Activated CD4-positive, alpha-beta T cell treated with anti-CD3 and anti-CD28 coated beads, Interleukin-2, amount 10 ng/mL, durations not matched to agents 24 days and 14 days (primary cell): ENCODE measurements at regions of chr6 and their contacts with region 1.

Region 1: DNA sequence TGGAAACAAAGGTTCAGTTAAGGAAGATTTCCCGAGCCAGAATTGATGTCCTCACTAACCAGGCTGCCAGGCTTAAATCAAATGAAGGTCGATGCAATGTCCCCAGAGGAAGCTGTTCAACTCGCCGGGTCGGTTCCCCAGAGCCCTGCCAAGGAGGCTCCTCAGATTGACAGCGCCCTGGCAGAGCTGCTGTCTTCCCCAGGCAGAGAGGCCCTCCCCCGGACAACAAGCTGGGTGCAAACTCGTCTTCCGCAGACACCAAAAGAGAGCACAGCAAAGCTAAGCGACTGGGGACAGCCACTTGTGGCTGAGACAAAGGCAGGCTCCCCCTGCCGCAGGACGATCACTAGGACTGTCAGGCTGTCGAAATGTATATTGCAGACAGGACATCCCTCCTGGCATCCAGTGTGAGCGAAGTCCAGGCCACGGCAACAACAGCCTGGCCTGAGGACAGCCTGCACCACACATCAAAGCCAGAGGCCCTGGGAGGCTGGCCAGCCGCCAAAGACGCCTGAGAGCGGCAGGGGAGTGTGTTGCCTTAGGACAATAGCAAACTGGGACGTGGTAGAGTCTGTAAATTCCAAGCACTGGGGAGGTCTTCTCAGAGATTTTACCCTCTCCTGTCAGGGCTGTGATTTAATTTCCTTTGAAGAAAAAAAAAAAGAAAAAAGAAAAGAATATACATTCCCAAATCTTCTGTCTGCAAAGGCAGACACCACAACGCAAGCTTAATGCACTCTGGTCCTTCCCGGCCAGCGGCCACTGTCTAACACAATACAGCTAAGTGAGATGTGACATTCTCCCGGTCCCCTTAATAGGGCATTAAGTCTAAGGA is 99.1 kb downstream of the HIVEP2 start:
- DNase-seq: peak; percentile 86
- H3K4me3 Mint-ChIP-seq: peak overlapping the region; percentile 78
- H3K27ac Mint-ChIP-seq: peak overlapping the region; percentile 82
- H3K4me1 Mint-ChIP-seq: peaks cover 77% of the 10 kb centered on the region
- H3K27me3 Mint-ChIP-seq: no peaks in the 10 kb centered on the region

Region 2: GRCh38 chr6:142485256-142485655 is 360.6 kb before region 1 on chr6:
- intact Hi-C with region 1: no loop called
- DNase-seq: no peak
- H3K4me3 Mint-ChIP-seq: no peak overlapping the region
- H3K27ac Mint-ChIP-seq: no peak overlapping the region
- H3K4me1 Mint-ChIP-seq: no peaks in the 10 kb centered on the region
- H3K27me3 Mint-ChIP-seq: peaks cover 2% of the 10 kb centered on the region

Region 3: DNA sequence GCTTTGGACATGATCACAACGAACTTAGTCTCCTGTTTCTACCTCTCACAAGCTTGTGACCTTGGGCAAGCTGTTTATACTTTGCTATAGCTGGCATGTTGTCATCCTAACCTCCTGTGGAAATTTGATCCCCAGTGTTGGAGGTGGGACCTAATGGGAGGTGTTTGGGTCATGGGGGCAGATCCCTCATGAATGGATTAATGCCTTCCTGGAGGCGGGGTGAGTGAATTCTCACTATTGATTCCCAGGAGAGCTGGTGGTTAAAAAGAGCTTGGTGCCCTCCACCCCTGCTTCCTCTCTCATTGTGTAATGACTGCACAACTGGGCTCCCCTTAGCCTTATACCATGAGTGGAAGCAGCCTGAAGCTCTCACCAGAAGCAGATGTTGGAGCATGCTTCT is 129.7 kb before region 1 on chr6:
- intact Hi-C with region 1: no loop called
- DNase-seq: no peak
- H3K4me3 Mint-ChIP-seq: no peak overlapping the region
- H3K27ac Mint-ChIP-seq: no peak overlapping the region
- H3K4me1 Mint-ChIP-seq: no peaks in the 10 kb centered on the region
- H3K27me3 Mint-ChIP-seq: no peaks in the 10 kb centered on the region

Region 4: GRCh38 chr6:142802124-142802523 is 43.7 kb before region 1 on chr6:
- intact Hi-C with region 1: loop called (anchors 1 kb)
- DNase-seq: no peak
- H3K4me3 Mint-ChIP-seq: peak overlapping the region; percentile 52
- H3K27ac Mint-ChIP-seq: peak overlapping the region; percentile 82
- H3K4me1 Mint-ChIP-seq: peaks cover 54% of the 10 kb centered on the region
- H3K27me3 Mint-ChIP-seq: no peaks in the 10 kb centered on the region

Region 5: GRCh38 chr6:142819603-142820337 is 26.1 kb before region 1 on chr6:
- intact Hi-C with region 1: loop called (anchors 1 kb)
- DNase-seq: peak; percentile 86
- H3K4me3 Mint-ChIP-seq: peak overlapping the region; percentile 88
- H3K27ac Mint-ChIP-seq: peak overlapping the region; percentile 94
- H3K4me1 Mint-ChIP-seq: peaks cover 63% of the 10 kb centered on the region
- H3K27me3 Mint-ChIP-seq: peaks cover 2% of the 10 kb centered on the region

Region 6: DNA sequence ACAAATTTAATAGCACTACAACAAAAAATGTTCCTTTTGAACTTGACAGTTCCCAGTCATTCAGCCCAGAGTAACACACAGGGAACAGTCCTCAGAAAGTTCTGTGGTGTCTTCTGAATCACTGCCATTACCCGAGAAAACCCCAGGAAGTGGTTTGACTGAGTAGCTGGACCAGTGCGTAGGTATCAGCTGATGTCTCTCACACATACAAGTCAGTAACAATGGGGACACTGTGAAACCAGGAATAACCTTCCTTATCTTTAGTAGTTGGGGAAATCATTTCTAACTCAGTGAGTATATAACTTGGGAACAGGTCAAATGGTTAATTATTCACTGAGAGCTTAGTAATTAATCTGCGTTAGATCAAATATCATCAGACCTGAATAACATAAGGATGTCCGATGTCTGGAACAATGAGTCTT is 26.1 kb after region 1 on chr6:
- intact Hi-C with region 1: loop called (anchors 1 kb)
- DNase-seq: peak; percentile 87
- H3K4me3 Mint-ChIP-seq: peak overlapping the region; percentile 78
- H3K27ac Mint-ChIP-seq: peak overlapping the region; percentile 66
- H3K4me1 Mint-ChIP-seq: peaks cover 77% of the 10 kb centered on the region
- H3K27me3 Mint-ChIP-seq: no peaks in the 10 kb centered on the region

Region 7: GRCh38 chr6:142902636-142903053 is 56.8 kb after region 1 on chr6:
- intact Hi-C with region 1: loop called (anchors 1 kb)
- DNase-seq: peak; percentile 93
- H3K4me3 Mint-ChIP-seq: peak overlapping the region; percentile 78
- H3K27ac Mint-ChIP-seq: peak overlapping the region; percentile 98
- H3K4me1 Mint-ChIP-seq: peaks cover 63% of the 10 kb centered on the region
- H3K27me3 Mint-ChIP-seq: no peaks in the 10 kb centered on the region

Region 8: GRCh38 chr6:143060354-143060805 is 214.5 kb after region 1 on chr6:
- intact Hi-C with region 1: loop called (anchors 5 kb)
- DNase-seq: peak; percentile 94
- H3K4me3 Mint-ChIP-seq: peak overlapping the region; percentile 91
- H3K27ac Mint-ChIP-seq: peak overlapping the region; percentile 92
- H3K4me1 Mint-ChIP-seq: peaks cover 23% of the 10 kb centered on the region
- H3K27me3 Mint-ChIP-seq: no peaks in the 10 kb centered on the region

Region 9: GRCh38 chr6:144469144-144469575 is 1623.3 kb after region 1 on chr6:
- intact Hi-C with region 1: loop called (anchors 5 kb)
- DNase-seq: no peak
- H3K4me3 Mint-ChIP-seq: peak overlapping the region; percentile 74
- H3K27ac Mint-ChIP-seq: peak overlapping the region; percentile 90
- H3K4me1 Mint-ChIP-seq: peaks cover 22% of the 10 kb centered on the region
- H3K27me3 Mint-ChIP-seq: no peaks in the 10 kb centered on the region